ENCODE measurements at regions of chr15 and their contacts with region 1.

Region 1: DNA sequence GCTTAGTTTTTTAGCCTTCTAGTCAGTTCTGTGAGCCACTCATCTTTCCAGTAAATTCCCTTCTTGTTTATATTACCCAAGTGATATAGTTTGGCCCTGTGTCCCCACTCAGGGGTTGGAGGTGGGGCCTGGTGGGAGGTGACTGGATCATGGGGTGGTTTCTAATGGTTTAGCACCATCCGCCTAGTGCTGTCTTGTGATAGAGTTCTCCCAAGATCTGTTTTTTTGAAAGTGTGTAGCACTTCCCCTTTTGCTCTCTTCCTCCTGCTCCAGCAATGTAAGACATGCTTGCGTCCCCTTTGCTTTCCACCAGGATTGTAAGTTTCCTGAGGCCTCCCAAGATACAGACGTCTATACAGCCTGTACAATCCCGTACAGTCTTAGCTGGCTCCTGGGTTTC is 53.7 kb upstream of the INO80 start:
- DNase-seq: peak; percentile 80

Region 2: DNA sequence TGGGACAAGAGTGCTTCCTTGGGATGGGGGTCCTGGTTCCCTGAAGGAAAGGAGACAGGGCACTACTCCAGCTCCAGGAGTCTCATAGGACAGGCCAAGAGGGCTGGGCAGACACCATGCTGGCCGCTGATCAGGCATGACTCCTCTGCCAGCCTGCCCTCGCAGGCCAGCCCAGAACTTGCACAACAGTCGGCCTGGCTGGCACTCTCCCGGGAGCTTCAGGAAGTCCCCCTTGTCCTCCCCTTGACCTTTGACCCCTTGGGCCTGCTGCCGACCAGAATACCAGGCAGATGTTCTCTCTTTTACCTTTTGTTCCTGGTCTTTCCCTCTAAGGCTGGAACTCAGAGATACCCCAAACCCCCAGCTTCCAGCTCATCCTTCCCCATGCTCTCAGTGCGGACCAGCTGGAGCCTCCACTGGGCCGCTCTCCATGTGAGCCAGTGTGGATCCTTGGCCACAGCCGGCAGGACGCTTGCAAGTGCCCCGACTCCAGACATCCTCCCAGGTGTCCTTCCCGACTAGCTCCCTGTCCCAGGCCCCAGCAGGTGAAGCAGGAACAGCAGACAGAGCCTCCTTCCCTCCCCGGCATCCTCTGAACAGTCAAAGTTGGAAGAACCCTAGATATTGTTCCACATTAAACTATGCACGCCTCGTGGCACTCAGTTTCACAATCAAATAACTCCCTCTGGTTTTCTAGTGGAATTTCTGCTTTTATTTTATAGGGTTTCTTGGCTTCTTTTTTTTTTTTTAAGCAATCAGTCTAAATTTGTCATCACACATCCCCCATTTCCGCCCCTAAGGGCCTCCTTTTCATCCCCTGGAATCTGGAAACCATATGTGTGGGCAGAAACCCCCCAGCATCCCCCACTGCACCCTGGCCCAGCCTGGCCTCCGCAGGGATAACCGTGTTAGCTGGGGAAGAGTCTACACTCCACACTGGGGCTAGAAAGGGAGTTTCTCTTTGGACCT is 259.8 kb before region 1 on chr15:
- in situ Hi-C with region 1: loop called (anchors 10 kb)
- DNase-seq: no peak

Region 3: DNA sequence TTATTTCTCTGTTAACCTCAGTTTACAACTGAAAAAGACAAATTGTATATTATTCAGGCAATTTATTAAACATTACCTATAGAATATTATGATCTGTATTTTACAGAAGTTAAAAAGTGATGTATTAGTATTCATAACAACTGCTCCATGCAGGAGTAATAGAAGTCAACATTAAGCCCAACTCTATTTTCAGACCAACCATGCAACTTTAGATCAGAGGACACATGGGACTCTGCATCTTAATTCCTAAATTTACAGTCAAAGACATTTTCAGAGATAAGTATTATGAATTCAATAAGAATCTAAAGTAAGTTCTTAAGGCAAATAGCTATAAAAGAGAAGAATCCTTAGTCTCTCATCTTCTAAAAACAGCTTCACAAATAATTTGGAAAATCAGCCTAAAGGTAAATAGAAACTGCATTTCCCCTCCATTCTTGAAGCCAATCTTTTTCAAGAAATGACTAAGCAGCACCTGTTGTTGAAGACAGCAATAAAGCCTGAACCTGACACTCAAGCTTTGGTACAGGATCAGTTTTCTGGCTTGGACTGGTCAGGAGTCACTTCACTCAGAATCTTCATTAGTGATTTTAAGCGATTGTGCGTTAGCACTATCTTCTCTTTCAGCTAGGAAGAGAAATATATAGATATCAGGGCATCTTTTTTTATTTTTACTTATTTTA is 139.6 kb after region 1 on chr15:
- in situ Hi-C with region 1: no loop called
- DNase-seq: no peak